B cell (primary cell): ENCODE measurements at regions of chr11 and their contacts with region 1.

Region 1: GRCh38 chr11:117843666-117844484 is 19.3 kb upstream of the FXYD2 start:
- DNase-seq: peak; percentile 84
- ATAC-seq: peak; percentile 93
- H3K4me3 ChIP-seq: no peak overlapping the region
- H3K4me3 Mint-ChIP-seq: no peak overlapping the region
- H3K27ac ChIP-seq: no peak overlapping the region
- H3K27ac Mint-ChIP-seq: no peak overlapping the region
- H3K4me1 ChIP-seq: peaks cover 0 to 3% of the 10 kb centered on the region in 2 donors
- H3K4me1 Mint-ChIP-seq: no peaks in the 10 kb centered on the region
- H3K27me3 ChIP-seq: no peaks in the 10 kb centered on the region
- H3K27me3 Mint-ChIP-seq: peaks cover 5% of the 10 kb centered on the region
- CTCF ChIP-seq: peak; percentile 99

Region 2: DNA sequence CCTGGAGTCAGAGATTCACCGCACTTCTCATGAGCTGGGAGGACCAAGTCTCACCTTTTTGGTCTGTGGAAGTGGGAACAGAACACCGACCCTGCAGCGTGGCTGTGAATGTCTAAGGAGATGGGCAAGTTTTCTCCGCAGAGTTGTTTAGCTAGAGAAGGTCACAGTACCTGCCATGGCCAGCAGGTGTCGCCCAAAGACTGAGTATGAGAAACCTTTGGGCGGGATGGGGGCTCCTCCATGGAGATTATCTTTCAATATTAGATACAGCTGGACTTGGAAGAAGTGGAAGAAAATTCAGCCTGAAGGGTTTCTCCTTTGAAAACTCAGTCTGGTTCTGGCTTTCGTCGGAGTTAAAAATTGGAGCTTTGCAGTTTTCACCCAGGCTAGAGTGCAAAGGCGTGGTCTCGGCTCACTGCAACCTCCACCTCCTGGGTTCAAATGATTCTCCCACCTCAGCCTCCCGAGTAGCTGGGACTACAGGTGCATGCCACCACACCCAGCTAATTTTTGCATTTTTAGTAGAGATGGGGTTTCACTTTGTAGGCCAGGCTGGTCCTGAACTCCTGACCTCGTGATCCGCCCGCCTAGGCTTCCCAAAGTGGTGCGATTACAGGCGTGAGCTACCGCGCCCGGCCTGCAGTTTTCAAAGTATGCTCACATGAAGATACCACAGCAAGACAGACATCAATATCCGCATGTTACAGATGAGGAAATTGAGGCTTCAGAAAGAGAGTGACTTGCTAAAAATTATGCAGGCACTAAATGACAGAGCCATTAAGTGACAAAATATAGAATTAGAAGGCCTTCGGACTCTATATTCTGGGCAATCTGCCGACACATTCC is 36.2 kb before region 1 on chr11:
- CTCF ChIA-PET with region 1: interaction called, 53 read pairs
- POLR2A ChIA-PET with region 1: no interaction called
- intact Hi-C with region 1: loop called (anchors 1 kb)
- DNase-seq: peak; percentile 80
- ATAC-seq: peak; percentile 81
- H3K4me3 ChIP-seq: no peak overlapping the region
- H3K4me3 Mint-ChIP-seq: no peak overlapping the region
- H3K27ac ChIP-seq: no peak overlapping the region
- H3K27ac Mint-ChIP-seq: no peak overlapping the region
- H3K4me1 ChIP-seq: peaks cover 0 to 9% of the 10 kb centered on the region in 2 donors
- H3K4me1 Mint-ChIP-seq: peaks cover 5% of the 10 kb centered on the region
- H3K27me3 ChIP-seq: peaks cover 0 to 9% (median 0%) of the 10 kb centered on the region in 4 experiments
- H3K27me3 Mint-ChIP-seq: peaks cover 10% of the 10 kb centered on the region
- CTCF ChIP-seq: peak; percentile 97

Region 3: GRCh38 chr11:117828611-117829368 is 15.1 kb before region 1 on chr11:
- CTCF ChIA-PET with region 1: interaction called, 29 read pairs
- POLR2A ChIA-PET with region 1: no interaction called
- intact Hi-C with region 1: no loop called
- DNase-seq: peak; percentile 51
- ATAC-seq: peak; percentile 91
- H3K4me3 ChIP-seq: no peak overlapping the region
- H3K4me3 Mint-ChIP-seq: peak overlapping the region; percentile 57
- H3K27ac ChIP-seq: no peak overlapping the region
- H3K27ac Mint-ChIP-seq: peak overlapping the region; percentile 78
- H3K4me1 ChIP-seq: peaks cover 30 to 33% of the 10 kb centered on the region in 2 donors
- H3K4me1 Mint-ChIP-seq: peaks cover 38% of the 10 kb centered on the region
- H3K27me3 ChIP-seq: peaks cover 0 to 52% (median 9%) of the 10 kb centered on the region in 4 experiments
- H3K27me3 Mint-ChIP-seq: peaks cover 35% of the 10 kb centered on the region
- CTCF ChIP-seq: no peak

Region 4: GRCh38 chr11:118002541-118003423 is 158.9 kb after region 1 on chr11:
- CTCF ChIA-PET with region 1: interaction called, 16 read pairs
- POLR2A ChIA-PET with region 1: no interaction called
- intact Hi-C with region 1: no loop called
- DNase-seq: peak; percentile 52
- ATAC-seq: peak; percentile 14
- H3K4me3 ChIP-seq: no peak overlapping the region
- H3K4me3 Mint-ChIP-seq: peak overlapping the region; percentile 56
- H3K27ac ChIP-seq: peak overlapping the region; percentile 64 to 99
- H3K27ac Mint-ChIP-seq: peak overlapping the region; percentile 99
- H3K4me1 ChIP-seq: peaks cover 67 to 76% of the 10 kb centered on the region in 2 donors
- H3K4me1 Mint-ChIP-seq: peaks cover 84% of the 10 kb centered on the region
- H3K27me3 ChIP-seq: no peaks in the 10 kb centered on the region
- H3K27me3 Mint-ChIP-seq: no peaks in the 10 kb centered on the region
- CTCF ChIP-seq: no peak

Region 5: GRCh38 chr11:118171269-118172062 is 327.6 kb after region 1 on chr11:
- CTCF ChIA-PET with region 1: interaction called, 35 read pairs
- POLR2A ChIA-PET with region 1: no interaction called
- intact Hi-C with region 1: loop called (anchors 1 kb)
- DNase-seq: peak; percentile 77
- ATAC-seq: peak; percentile 88
- H3K4me3 ChIP-seq: no peak overlapping the region
- H3K4me3 Mint-ChIP-seq: no peak overlapping the region
- H3K27ac ChIP-seq: no peak overlapping the region
- H3K27ac Mint-ChIP-seq: no peak overlapping the region
- H3K4me1 ChIP-seq: peaks cover 0 to 5% of the 10 kb centered on the region in 2 donors
- H3K4me1 Mint-ChIP-seq: peaks cover 3% of the 10 kb centered on the region
- H3K27me3 ChIP-seq: peaks cover 0 to 15% (median 1%) of the 10 kb centered on the region in 4 experiments
- H3K27me3 Mint-ChIP-seq: peaks cover 46% of the 10 kb centered on the region
- CTCF ChIP-seq: peak; percentile 96